ENCODE measurements at regions of chr20 and their contacts with region 1.

Region 1: GRCh38 chr20:23235173-23236027 is 115.2 kb upstream of the NXT1 start:
- DNase-seq: peak in 1 of 2 donors; percentile 84
- H3K4me3 ChIP-seq: no peak overlapping the region
- H3K27ac ChIP-seq: no peak overlapping the region
- H3K4me1 ChIP-seq: no peaks in the 10 kb centered on the region
- H3K27me3 ChIP-seq: no peaks in the 10 kb centered on the region
- CTCF ChIP-seq: peak; percentile 67 to 86 (median 84)

Region 2: GRCh38 chr20:22691369-22692118 is 543.9 kb before region 1 on chr20:
- intact Hi-C with region 1: loop called (anchors 2 kb)
- DNase-seq: peak in 1 of 2 donors; percentile 88
- H3K4me3 ChIP-seq: peak overlapping the region in 1 of 2 donors; percentile 28
- H3K27ac ChIP-seq: no peak overlapping the region
- H3K4me1 ChIP-seq: peaks cover 0 to 6% of the 10 kb centered on the region in 2 donors
- H3K27me3 ChIP-seq: no peaks in the 10 kb centered on the region
- CTCF ChIP-seq: peak; percentile 82 to 91 (median 85)

Measured in ascending aorta (tissue), 2 donors.